ENCODE measurements at regions of chr4 and their contacts with region 1.

Region 1: GRCh38 chr4:83569987-83570386 is 34.1 kb downstream of the GPAT3 start:
- DNase-seq: peak; percentile 65 to 97
- H3K4me3 ChIP-seq: peak overlapping the region; percentile 44; the same call in 1 of the 2 replicates
- H3K27ac ChIP-seq: peak overlapping the region; percentile 97
- H3K4me1 ChIP-seq: peaks cover 40% of the 10 kb centered on the region
- H3K27me3 ChIP-seq: no peaks in the 10 kb centered on the region
- CTCF ChIP-seq: no peak

Region 2: GRCh38 chr4:83334425-83335241 is 235.4 kb before region 1 on chr4 and contains the start of gene HPSE:
- CTCF ChIA-PET with region 1: no interaction called
- POLR2A ChIA-PET with region 1: no interaction called
- intact Hi-C with region 1: no loop called
- DNase-seq: peak; percentile 71 to 85
- H3K4me3 ChIP-seq: peak within 1 kb of the TSS; percentile 68
- H3K27ac ChIP-seq: no peak within 1 kb of the TSS
- H3K4me1 ChIP-seq: no peaks in the 10 kb centered on the region; the same call in 1 of the 2 replicates
- H3K27me3 ChIP-seq: no peaks in the 10 kb centered on the region
- CTCF ChIP-seq: no peak
- total RNA-seq, gene HPSE: 4.4 and 6.6 TPM in 2 replicates

Region 3: GRCh38 chr4:83535520-83536361 is 34.2 kb before region 1 on chr4 and contains the start of gene GPAT3:
- CTCF ChIA-PET with region 1: no interaction called
- POLR2A ChIA-PET with region 1: interaction called, 3 read pairs
- intact Hi-C with region 1: loop called (anchors 1 kb)
- DNase-seq: peak; percentile 80 to 82
- H3K4me3 ChIP-seq: peak within 1 kb of the TSS; percentile 94
- H3K27ac ChIP-seq: peak within 1 kb of the TSS; percentile 92
- H3K4me1 ChIP-seq: peaks cover 30% of the 10 kb centered on the region
- H3K27me3 ChIP-seq: no peaks in the 10 kb centered on the region
- CTCF ChIP-seq: no peak
- total RNA-seq, gene GPAT3: 27.0 and 29.1 TPM in 2 replicates

Region 4: DNA sequence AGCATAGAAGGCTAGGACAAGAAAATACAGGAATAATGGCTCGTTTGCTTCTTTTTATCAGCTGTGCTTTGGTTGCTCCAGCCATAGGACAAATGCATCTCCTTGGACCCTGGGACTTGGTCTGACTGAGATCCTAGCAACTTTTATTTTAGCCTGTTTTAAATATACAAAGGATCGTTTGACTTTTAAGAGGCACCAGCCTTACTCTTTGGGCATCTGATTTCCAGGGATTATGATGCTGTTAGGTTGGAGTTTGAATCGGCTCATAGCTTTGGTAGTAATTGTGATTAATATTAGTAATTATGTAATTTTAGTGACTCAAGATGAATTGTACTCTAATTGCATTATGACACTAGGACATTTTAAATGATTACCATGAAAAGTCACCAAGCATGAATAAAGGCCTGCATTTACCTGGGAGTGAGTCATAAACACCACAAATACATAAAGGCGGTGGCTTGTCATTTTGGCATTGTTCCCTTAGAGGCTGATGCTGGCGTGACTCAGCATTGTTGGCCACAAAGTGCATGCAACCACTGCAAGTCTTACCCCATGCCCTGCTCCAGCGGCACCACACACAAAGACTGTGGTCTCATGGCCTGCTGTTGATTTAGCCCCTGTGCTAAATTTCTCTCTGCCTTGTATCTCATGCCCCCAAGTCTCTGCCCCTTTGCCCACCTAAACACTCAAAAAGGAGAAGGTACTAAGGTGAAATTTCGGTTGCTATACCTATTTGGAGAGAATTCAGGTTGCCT is 21.7 kb before region 1 on chr4:
- CTCF ChIA-PET with region 1: no interaction called
- POLR2A ChIA-PET with region 1: no interaction called
- intact Hi-C with region 1: loop called (anchors 2 kb)
- DNase-seq: peak; percentile 79 to 94
- H3K4me3 ChIP-seq: peak overlapping the region; percentile 21; the same call in 1 of the 2 replicates
- H3K27ac ChIP-seq: peak overlapping the region; percentile 100
- H3K4me1 ChIP-seq: peaks cover 61% of the 10 kb centered on the region
- H3K27me3 ChIP-seq: no peaks in the 10 kb centered on the region
- CTCF ChIP-seq: no peak

Measured in PC-9 (cell line).